CD4-positive, alpha-beta memory T cell (primary cell): ENCODE measurements at regions of chr7 and their contacts with region 1.

Region 1: DNA sequence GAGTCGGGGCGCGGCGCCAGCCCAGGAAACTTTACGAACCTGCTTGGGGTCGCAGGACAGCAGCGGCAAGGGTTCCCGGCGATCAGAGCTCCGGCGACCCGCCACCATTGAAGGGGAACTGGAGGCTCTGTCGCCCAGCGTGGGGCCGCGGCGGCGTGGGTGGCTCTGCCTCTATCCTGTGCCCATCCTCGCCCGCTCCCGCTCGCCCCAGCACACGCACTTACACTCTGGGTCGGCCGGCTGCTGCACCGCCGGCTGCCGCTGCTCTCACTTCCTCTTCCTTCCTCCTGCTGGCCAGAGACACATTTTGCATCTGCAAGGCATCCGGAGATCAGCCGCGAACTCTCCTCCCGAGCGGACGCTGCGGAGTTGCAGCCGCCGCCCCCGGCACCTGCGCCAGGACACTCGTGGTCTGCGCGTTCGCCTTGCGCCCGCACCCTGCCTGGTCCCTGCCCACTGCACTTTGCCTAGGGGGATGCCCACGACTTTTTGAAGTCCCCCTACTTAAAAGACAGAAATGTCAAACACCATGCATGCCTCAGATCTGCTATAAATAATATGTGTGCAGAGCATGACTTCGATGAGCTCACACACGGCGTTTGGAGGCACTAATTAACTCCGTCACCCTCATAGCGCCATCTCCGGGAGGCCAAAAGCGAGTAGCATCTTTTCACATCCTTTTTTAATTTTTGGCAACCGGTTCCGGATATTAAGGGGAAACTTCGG is at the start of gene ELMO1:
- DNase-seq: peak; percentile 85 to 89 (median 88)
- H3K4me3 ChIP-seq: peak within 1 kb of the TSS; percentile 31 to 78
- H3K4me3 Mint-ChIP-seq: peak within 1 kb of the TSS; percentile 96 to 99 (median 98)
- H3K27ac ChIP-seq: peak within 1 kb of the TSS; percentile 85
- H3K27ac Mint-ChIP-seq: peak within 1 kb of the TSS; percentile 97 to 100 (median 99)
- H3K4me1 ChIP-seq: peaks cover 44% of the 10 kb centered on the region
- H3K4me1 Mint-ChIP-seq: peaks cover 39 to 62% (median 49%) of the 10 kb centered on the region in 4 donors
- H3K27me3 ChIP-seq: no peaks in the 10 kb centered on the region
- H3K27me3 Mint-ChIP-seq: peaks cover 2 to 3% of the 10 kb centered on the region in 2 donors
- total RNA-seq, gene ELMO1: 123 to 131 TPM

Region 2: GRCh38 chr7:37208528-37208927 is 240.3 kb before region 1 on chr7:
- CTCF ChIA-PET with region 1: interaction called, 5 read pairs
- POLR2A ChIA-PET with region 1: interaction called, 7 read pairs
- intact Hi-C with region 1: loop called (anchors 2 kb)
- DNase-seq: peak in 4 of 5 donors; percentile 15 to 38 (median 32)
- H3K4me3 ChIP-seq: no peak overlapping the region
- H3K4me3 Mint-ChIP-seq: no peak overlapping the region
- H3K27ac ChIP-seq: no peak overlapping the region
- H3K27ac Mint-ChIP-seq: peak overlapping the region; percentile 22 to 84 (median 64)
- H3K4me1 ChIP-seq: no peaks in the 10 kb centered on the region
- H3K4me1 Mint-ChIP-seq: peaks cover 0 to 3% (median under 1%) of the 10 kb centered on the region in 4 donors
- H3K27me3 ChIP-seq: no peaks in the 10 kb centered on the region
- H3K27me3 Mint-ChIP-seq: no peaks in the 10 kb centered on the region

Region 3: GRCh38 chr7:37284805-37285231 is 164.0 kb before region 1 on chr7:
- CTCF ChIA-PET with region 1: interaction called, 34 read pairs
- POLR2A ChIA-PET with region 1: interaction called, 17 read pairs
- intact Hi-C with region 1: loop called (anchors 1 kb)
- DNase-seq: peak in 4 of 5 donors; percentile 17 to 43 (median 28)
- H3K4me3 ChIP-seq: no peak overlapping the region
- H3K4me3 Mint-ChIP-seq: no peak overlapping the region
- H3K27ac ChIP-seq: no peak overlapping the region
- H3K27ac Mint-ChIP-seq: peak overlapping the region in 5 of 7 donors; percentile 47 to 81 (median 71)
- H3K4me1 ChIP-seq: peaks cover 28% of the 10 kb centered on the region
- H3K4me1 Mint-ChIP-seq: peaks cover 38 to 57% (median 51%) of the 10 kb centered on the region in 4 donors
- H3K27me3 ChIP-seq: no peaks in the 10 kb centered on the region
- H3K27me3 Mint-ChIP-seq: no peaks in the 10 kb centered on the region

Region 4: GRCh38 chr7:37342688-37343471 is 105.9 kb before region 1 on chr7:
- CTCF ChIA-PET with region 1: interaction called, 17 read pairs
- POLR2A ChIA-PET with region 1: interaction called, 62 read pairs
- intact Hi-C with region 1: loop called (anchors 1 kb)
- DNase-seq: peak; percentile 75 to 89 (median 79)
- H3K4me3 ChIP-seq: peak overlapping the region; percentile 39 to 70
- H3K4me3 Mint-ChIP-seq: peak overlapping the region; percentile 92 to 99 (median 96)
- H3K27ac ChIP-seq: peak overlapping the region; percentile 75
- H3K27ac Mint-ChIP-seq: peak overlapping the region; percentile 92 to 98 (median 98)
- H3K4me1 ChIP-seq: peaks cover 90% of the 10 kb centered on the region
- H3K4me1 Mint-ChIP-seq: peaks cover 54 to 89% (median 74%) of the 10 kb centered on the region in 4 donors
- H3K27me3 ChIP-seq: no peaks in the 10 kb centered on the region
- H3K27me3 Mint-ChIP-seq: no peaks in the 10 kb centered on the region

Region 5: GRCh38 chr7:37359662-37360444 is 88.9 kb before region 1 on chr7:
- CTCF ChIA-PET with region 1: interaction called, 76 read pairs
- POLR2A ChIA-PET with region 1: interaction called, 123 read pairs
- intact Hi-C with region 1: no loop called
- DNase-seq: peak in 1 of 5 donors; percentile 61
- H3K4me3 ChIP-seq: peak overlapping the region in 1 of 2 donors; percentile 0
- H3K4me3 Mint-ChIP-seq: peak overlapping the region; percentile 47 to 89 (median 70)
- H3K27ac ChIP-seq: peak overlapping the region; percentile 2
- H3K27ac Mint-ChIP-seq: peak overlapping the region; percentile 20 to 92 (median 74)
- H3K4me1 ChIP-seq: peaks cover 73% of the 10 kb centered on the region
- H3K4me1 Mint-ChIP-seq: peaks cover 59 to 93% (median 78%) of the 10 kb centered on the region in 4 donors
- H3K27me3 ChIP-seq: no peaks in the 10 kb centered on the region
- H3K27me3 Mint-ChIP-seq: no peaks in the 10 kb centered on the region

Region 6: DNA sequence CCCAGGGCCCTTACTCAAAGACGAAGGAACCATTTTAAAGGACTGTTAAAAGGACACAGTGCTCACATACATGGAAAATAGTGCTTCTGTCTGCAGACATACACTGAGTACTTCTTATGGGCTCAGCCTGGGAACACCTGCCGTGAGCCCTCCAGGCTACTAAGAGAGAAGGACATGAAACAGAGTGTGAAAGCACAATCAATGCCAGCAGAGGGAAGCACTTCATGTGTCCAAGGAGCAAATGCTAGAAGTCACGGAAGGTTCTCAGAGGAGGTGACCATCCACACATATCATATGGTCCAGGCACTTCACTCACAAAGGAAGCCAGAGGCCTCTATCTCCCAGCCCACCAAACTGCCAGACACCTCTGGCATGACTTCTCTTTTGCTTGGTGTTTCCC is 15.6 kb before region 1 on chr7:
- CTCF ChIA-PET with region 1: interaction called, 13 read pairs
- POLR2A ChIA-PET with region 1: interaction called, 27 read pairs
- intact Hi-C with region 1: loop called (anchors 2 kb)
- DNase-seq: no peak
- H3K4me3 ChIP-seq: no peak overlapping the region
- H3K4me3 Mint-ChIP-seq: peak overlapping the region in 4 of 8 donors; percentile 31 to 73 (median 70)
- H3K27ac ChIP-seq: no peak overlapping the region
- H3K27ac Mint-ChIP-seq: peak overlapping the region in 5 of 7 donors; percentile 21 to 76 (median 61)
- H3K4me1 ChIP-seq: peaks cover 46% of the 10 kb centered on the region
- H3K4me1 Mint-ChIP-seq: peaks cover 55 to 79% (median 64%) of the 10 kb centered on the region in 4 donors
- H3K27me3 ChIP-seq: no peaks in the 10 kb centered on the region
- H3K27me3 Mint-ChIP-seq: no peaks in the 10 kb centered on the region

Region 7: DNA sequence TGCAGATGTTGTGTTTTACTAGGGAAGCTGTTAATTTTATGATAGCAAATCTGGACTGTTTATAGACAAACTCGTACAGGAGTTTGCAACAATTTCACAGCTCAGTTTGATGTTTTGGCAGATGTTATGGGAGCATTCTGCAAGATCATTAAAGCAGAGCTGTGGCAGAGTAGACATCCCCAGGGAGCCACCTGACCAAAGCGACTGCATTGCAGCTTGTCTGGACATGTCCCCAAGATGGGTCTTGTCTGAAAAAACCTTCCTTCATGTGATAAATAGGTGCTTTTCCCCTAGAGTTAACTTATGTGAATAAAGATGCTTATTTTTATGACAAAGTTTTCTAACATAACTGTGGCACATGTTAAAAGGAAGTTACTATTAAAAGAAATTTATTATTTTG is 143.6 kb after region 1 on chr7:
- CTCF ChIA-PET with region 1: no interaction called
- POLR2A ChIA-PET with region 1: no interaction called
- intact Hi-C with region 1: no loop called
- DNase-seq: no peak
- H3K4me3 ChIP-seq: no peak overlapping the region
- H3K4me3 Mint-ChIP-seq: no peak overlapping the region
- H3K27ac ChIP-seq: no peak overlapping the region
- H3K27ac Mint-ChIP-seq: no peak overlapping the region
- H3K4me1 ChIP-seq: no peaks in the 10 kb centered on the region
- H3K4me1 Mint-ChIP-seq: no peaks in the 10 kb centered on the region
- H3K27me3 ChIP-seq: peaks cover 6% of the 10 kb centered on the region
- H3K27me3 Mint-ChIP-seq: peaks cover 17 to 18% of the 10 kb centered on the region in 2 donors